ENCODE measurements at regions of chr6 and their contacts with region 1.

Region 1: GRCh38 chr6:166786704-166787293 is 159.7 kb upstream of the RPS6KA2 start:
- DNase-seq: no peak

Region 2: GRCh38 chr6:166950443-166950821 is 163.6 kb after region 1 on chr6:
- intact Hi-C with region 1: loop called (anchors 5 kb)
- DNase-seq: peak in 2 of 10 donors; percentile 16 to 58

Region 3: GRCh38 chr6:166989427-166990032 is 202.7 kb after region 1 on chr6:
- intact Hi-C with region 1: loop called (anchors 2 kb)
- DNase-seq: peak in 1 of 10 donors; percentile 26